Activated CD8-positive, alpha-beta T cell treated with anti-CD3 and anti-CD28 coated beads for 36 hours (primary cell): ENCODE measurements at regions of chr22 and their contacts with region 1.

Region 1: DNA sequence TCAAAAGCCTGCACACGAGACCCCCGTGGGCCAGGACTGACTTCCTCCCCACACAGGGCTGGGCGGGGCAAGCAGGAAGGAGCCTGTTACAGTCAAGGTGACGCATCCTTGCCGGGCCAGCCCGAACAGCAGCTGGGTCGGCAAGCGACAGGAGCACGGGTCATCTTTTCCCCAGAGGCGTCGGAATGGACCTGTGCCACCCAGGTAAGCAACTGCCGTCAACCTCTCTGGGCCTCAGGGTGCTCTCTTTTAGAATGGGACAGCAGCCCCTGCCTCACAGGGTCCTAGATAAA is at the start of gene CYTH4:
- DNase-seq: peak; percentile 91
- ATAC-seq: peak; percentile 86
- H3K4me3 Mint-ChIP-seq: peak within 1 kb of the TSS; percentile 86
- H3K27ac Mint-ChIP-seq: peak within 1 kb of the TSS; percentile 99
- H3K4me1 Mint-ChIP-seq: peaks cover 61% of the 10 kb centered on the region
- H3K27me3 Mint-ChIP-seq: no peaks in the 10 kb centered on the region
- CTCF ChIP-seq: no peak
- total RNA-seq, gene CYTH4: 33.2 to 33.4 TPM

Region 2: DNA sequence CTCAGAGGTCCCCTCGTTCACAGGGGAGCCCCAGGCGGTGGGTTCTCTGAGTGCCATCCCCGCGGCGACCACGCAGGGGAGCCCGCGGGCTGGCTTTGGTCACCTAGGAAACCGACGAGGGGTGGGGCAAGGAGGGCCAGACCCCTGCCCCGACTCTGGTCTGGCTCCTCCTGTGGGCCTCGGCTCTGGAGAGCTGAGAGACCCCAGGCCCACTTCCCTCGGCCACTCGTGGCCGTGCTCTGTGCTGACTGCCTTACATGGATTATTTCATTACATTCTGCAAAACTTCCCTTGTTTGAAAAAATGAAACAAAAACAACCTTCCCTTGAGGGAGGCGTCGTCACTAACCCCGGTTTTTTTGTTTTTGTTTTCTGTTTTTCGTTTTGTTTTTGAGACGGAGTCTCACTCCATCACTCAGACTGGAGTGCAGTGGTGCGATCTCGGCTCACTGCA is 15.2 kb before region 1 on chr22:
- CTCF ChIA-PET with region 1: interaction called, 24 read pairs
- POLR2A ChIA-PET with region 1: interaction called, 4 read pairs
- intact Hi-C with region 1: no loop called
- DNase-seq: peak; percentile 75
- ATAC-seq: peak; percentile 96
- H3K4me3 Mint-ChIP-seq: peak overlapping the region; percentile 73
- H3K27ac Mint-ChIP-seq: peak overlapping the region; percentile 81
- H3K4me1 Mint-ChIP-seq: peaks cover 28% of the 10 kb centered on the region
- H3K27me3 Mint-ChIP-seq: no peaks in the 10 kb centered on the region
- CTCF ChIP-seq: peak; percentile 99

Region 3: GRCh38 chr22:37353839-37354238 is 71.5 kb after region 1 on chr22:
- CTCF ChIA-PET with region 1: no interaction called
- POLR2A ChIA-PET with region 1: no interaction called
- intact Hi-C with region 1: no loop called
- DNase-seq: no peak
- ATAC-seq: no peak
- H3K4me3 Mint-ChIP-seq: no peak overlapping the region
- H3K27ac Mint-ChIP-seq: no peak overlapping the region
- H3K4me1 Mint-ChIP-seq: no peaks in the 10 kb centered on the region
- H3K27me3 Mint-ChIP-seq: no peaks in the 10 kb centered on the region
- CTCF ChIP-seq: no peak